Caco-2 (cell line): ENCODE measurements at regions of chr20 and their contacts with region 1.

Region 1: GRCh38 chr20:6636209-6637159 is 131.0 kb upstream of the BMP2 start:
- DNase-seq: peak; percentile 67 to 73
- H3K4me3 ChIP-seq: no peak overlapping the region
- H3K4me3 Mint-ChIP-seq: no peak overlapping the region
- H3K27ac Mint-ChIP-seq: peak overlapping the region; percentile 79
- H3K4me1 ChIP-seq: peaks cover 19% of the 10 kb centered on the region
- H3K4me1 Mint-ChIP-seq: peaks cover 23% of the 10 kb centered on the region
- H3K27me3 ChIP-seq: no peaks in the 10 kb centered on the region
- H3K27me3 Mint-ChIP-seq: no peaks in the 10 kb centered on the region
- CTCF ChIP-seq: peak; percentile 67 to 85

Region 2: DNA sequence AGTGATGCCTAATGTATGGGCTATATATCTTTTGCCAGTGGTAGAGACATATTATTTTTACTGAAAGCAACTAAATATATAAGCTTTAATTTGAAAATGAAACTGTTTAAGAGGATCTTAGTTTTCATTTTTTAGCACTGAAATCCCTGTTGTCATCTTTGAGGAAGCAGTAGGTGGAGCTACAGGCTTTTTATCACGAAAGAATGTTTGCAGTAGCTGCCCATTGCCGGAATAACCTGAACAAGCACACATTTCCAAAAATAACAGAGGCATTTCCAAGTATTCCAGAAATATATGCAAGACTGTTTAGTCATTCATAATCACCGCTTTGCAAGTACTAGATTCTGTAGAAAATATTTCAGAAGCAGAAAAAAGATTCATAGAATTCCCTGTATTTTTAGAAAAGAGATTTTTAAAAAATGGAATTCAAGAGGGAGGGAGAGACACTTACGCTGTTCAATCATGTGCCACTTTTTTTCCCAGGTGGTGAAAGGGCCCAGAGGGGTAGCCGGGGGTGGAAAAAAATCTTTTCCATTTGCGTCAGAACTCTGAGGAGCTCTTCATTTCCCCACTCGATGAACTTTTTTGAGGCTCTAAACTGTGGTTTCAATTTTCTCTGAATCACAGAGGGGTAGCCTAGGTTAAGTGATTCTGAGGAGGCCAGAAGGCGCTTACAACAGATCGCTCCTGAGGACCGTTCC is 371.1 kb before region 1 on chr20:
- CTCF ChIA-PET with region 1: no interaction called
- POLR2A ChIA-PET with region 1: no interaction called
- intact Hi-C with region 1: loop called (anchors 1 kb)
- DNase-seq: peak in 1 of 2 experiments; percentile 22
- H3K4me3 ChIP-seq: no peak overlapping the region
- H3K4me3 Mint-ChIP-seq: no peak overlapping the region
- H3K27ac Mint-ChIP-seq: no peak overlapping the region
- H3K4me1 ChIP-seq: no peaks in the 10 kb centered on the region
- H3K4me1 Mint-ChIP-seq: no peaks in the 10 kb centered on the region
- H3K27me3 ChIP-seq: no peaks in the 10 kb centered on the region; the same call in 1 of the 2 replicates
- H3K27me3 Mint-ChIP-seq: peaks cover 10% of the 10 kb centered on the region
- CTCF ChIP-seq: peak; percentile 48 to 62

Region 3: DNA sequence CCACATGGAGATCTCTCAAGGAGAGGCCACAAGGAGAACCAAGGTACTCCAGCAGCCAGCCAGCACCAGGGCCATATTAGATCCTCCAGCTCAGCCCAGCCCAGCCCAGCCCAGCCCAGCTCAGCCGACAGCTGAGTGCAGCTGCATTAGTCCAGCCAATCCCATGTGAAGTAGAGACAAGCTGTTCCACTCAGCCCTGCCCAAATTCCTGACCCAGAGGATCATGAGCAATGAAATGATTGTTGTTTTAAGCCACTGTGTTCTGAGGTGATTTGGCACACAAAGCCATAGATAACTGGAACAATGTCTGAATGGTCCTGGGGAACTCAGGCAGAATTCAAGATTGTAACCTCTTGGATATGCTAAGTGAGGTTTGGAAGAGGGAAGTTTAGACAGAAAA is 71.5 kb after region 1 on chr20:
- CTCF ChIA-PET with region 1: interaction called, 3 read pairs
- POLR2A ChIA-PET with region 1: no interaction called
- intact Hi-C with region 1: loop called (anchors 1 kb)
- DNase-seq: peak; percentile 83 to 92
- H3K4me3 ChIP-seq: no peak overlapping the region
- H3K4me3 Mint-ChIP-seq: peak overlapping the region; percentile 57
- H3K27ac Mint-ChIP-seq: peak overlapping the region; percentile 89
- H3K4me1 ChIP-seq: peaks cover 92% of the 10 kb centered on the region
- H3K4me1 Mint-ChIP-seq: peaks cover 82% of the 10 kb centered on the region
- H3K27me3 ChIP-seq: no peaks in the 10 kb centered on the region
- H3K27me3 Mint-ChIP-seq: no peaks in the 10 kb centered on the region
- CTCF ChIP-seq: no peak

Region 4: GRCh38 chr20:6819605-6820004 is 183.1 kb after region 1 on chr20:
- CTCF ChIA-PET with region 1: interaction called, 4 read pairs
- POLR2A ChIA-PET with region 1: no interaction called
- intact Hi-C with region 1: loop called (anchors 1 kb)
- DNase-seq: peak; percentile 49 to 52
- H3K4me3 ChIP-seq: no peak overlapping the region
- H3K4me3 Mint-ChIP-seq: no peak overlapping the region
- H3K27ac Mint-ChIP-seq: no peak overlapping the region
- H3K4me1 ChIP-seq: no peaks in the 10 kb centered on the region
- H3K4me1 Mint-ChIP-seq: no peaks in the 10 kb centered on the region
- H3K27me3 ChIP-seq: no peaks in the 10 kb centered on the region
- H3K27me3 Mint-ChIP-seq: no peaks in the 10 kb centered on the region
- CTCF ChIP-seq: peak; percentile 46